Right cardiac atrium (tissue), 5 donors: ENCODE measurements at regions of chr20 and their contacts with region 1.

Region 1: GRCh38 chr20:50478162-50479036 is 31.8 kb upstream of the PTPN1 start:
- DNase-seq: peak; percentile 60 to 79 (median 77)
- ATAC-seq: peak; percentile 71 to 83
- H3K4me3 ChIP-seq: no peak overlapping the region
- H3K27ac ChIP-seq: no peak overlapping the region
- H3K4me1 ChIP-seq: no peaks in the 10 kb centered on the region
- H3K27me3 ChIP-seq: no peaks in the 10 kb centered on the region

Region 2: GRCh38 chr20:50588034-50588611 is 109.7 kb after region 1 on chr20:
- intact Hi-C with region 1: loop called in 1 of 4 experiments (anchors 10 kb)
- DNase-seq: peak; percentile 76 to 88 (median 87)
- ATAC-seq: peak; percentile 29 to 46
- H3K4me3 ChIP-seq: no peak overlapping the region
- H3K27ac ChIP-seq: no peak overlapping the region
- H3K4me1 ChIP-seq: peaks cover 2% of the 10 kb centered on the region
- H3K27me3 ChIP-seq: no peaks in the 10 kb centered on the region

Region 3: GRCh38 chr20:50655311-50655880 is 177.0 kb after region 1 on chr20:
- intact Hi-C with region 1: no loop called
- DNase-seq: peak; percentile 71 to 89 (median 86)
- ATAC-seq: peak; percentile 83 to 88
- H3K4me3 ChIP-seq: no peak overlapping the region
- H3K27ac ChIP-seq: peak overlapping the region; percentile 74
- H3K4me1 ChIP-seq: peaks cover 18% of the 10 kb centered on the region
- H3K27me3 ChIP-seq: no peaks in the 10 kb centered on the region